K562 (cell line): ENCODE measurements at regions of chr10 and their contacts with region 1.

Region 1: DNA sequence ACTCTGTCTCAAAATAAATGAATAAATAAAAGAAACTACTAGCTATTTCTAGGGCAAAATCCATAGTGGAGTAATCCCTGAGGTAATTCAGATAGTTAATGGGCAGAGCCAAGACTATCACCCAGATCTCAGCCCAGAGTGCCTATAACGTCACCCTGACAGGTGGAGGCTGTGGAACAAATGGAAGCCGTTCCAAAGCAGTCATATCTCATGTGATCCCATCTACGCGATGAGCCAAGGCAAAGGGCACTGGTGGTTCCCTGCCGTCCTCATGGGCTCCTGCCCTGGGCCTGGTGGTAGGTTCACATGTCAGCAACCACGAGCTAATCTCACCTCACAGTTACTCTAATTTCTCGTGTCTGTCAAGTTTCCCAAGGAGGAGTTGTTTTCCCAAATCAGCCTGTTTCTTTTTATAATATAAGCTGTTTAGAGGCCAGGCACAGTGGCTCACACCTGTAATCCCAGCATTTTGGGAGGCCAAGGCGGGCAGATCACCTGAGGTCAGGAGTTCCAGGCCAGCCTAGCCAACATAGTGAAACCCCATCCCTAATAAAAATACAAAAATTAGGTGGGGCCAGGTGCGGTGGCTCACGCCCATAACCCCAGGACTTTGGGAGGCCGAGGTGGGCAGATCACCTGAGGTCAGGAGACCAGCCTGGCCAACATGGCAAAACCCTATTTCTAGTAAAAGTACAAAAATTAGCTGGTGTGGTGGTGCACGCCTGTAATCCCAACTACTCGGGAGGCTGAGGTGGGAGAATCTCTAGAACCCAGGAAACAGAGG is 22.5 kb upstream of the ASCC1 start:
- DNase-seq: no peak
- ATAC-seq: no peak
- H3K4me3 ChIP-seq: no peak overlapping the region
- H3K27ac ChIP-seq: no peak overlapping the region; the same call in 2 of the 3 replicates
- H3K4me1 ChIP-seq: peaks cover 0 to 4% of the 10 kb centered on the region in 2 experiments; a peak in 4 of 5 replicates
- H3K27me3 ChIP-seq: no peaks in the 10 kb centered on the region
- CTCF ChIP-seq: no peak
- EP300 ChIP-seq: no peak
- POLR2A ChIP-seq: no peak
- RAD21 ChIP-seq: no peak

Region 2: DNA sequence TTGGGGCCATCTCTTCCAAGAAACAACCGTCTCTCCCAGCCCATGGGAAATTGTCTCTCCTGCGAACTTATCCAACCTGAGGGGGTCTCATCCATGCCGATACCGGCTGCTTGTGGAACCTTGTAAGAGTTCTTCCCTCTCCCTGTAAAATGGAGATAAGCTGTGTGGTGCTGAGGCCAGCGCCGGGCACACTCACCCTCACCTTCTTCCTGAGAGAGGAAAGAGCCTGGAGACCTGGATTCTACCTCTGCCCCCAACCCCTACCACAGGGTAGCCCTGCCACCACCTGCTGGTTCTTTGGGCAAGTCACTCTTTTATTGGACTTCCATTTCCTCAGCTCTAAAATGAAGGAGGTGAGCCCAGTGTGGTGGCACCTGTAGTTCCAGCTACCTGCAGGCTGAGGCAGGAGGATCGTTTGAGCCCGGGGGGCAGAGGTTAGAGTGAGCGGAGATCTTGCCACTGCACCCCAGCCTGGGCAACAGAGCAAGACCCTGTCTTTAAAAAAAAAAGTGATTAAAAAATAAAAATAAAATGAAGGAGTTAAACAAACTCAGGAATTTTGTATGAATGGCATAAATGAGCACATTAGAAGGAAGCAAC is 349.1 kb before region 1 on chr10:
- CTCF ChIA-PET with region 1: no interaction called
- POLR2A ChIA-PET with region 1: no interaction called
- in situ Hi-C with region 1: no loop called
- intact Hi-C with region 1: no loop called
- DNase-seq: peak in 1 of 4 experiments; percentile 43
- ATAC-seq: peak; percentile 19
- H3K4me3 ChIP-seq: peak overlapping the region; percentile 47
- H3K27ac ChIP-seq: peak overlapping the region; percentile 76; the same call in 2 of the 3 replicates
- H3K4me1 ChIP-seq: peaks cover 26 to 41% of the 10 kb centered on the region in 2 experiments
- H3K27me3 ChIP-seq: no peaks in the 10 kb centered on the region
- CTCF ChIP-seq: peak in 2 of 3 experiments; percentile 2 to 34; a peak in 2 of 6 replicates
- EP300 ChIP-seq: no peak
- POLR2A ChIP-seq: no peak
- RAD21 ChIP-seq: peak in 1 of 2 experiments; percentile 40; a peak in 2 of 4 replicates

Region 3: GRCh38 chr10:71995887-71996575 is 242.6 kb before region 1 on chr10:
- CTCF ChIA-PET with region 1: no interaction called
- POLR2A ChIA-PET with region 1: no interaction called
- in situ Hi-C with region 1: no loop called
- intact Hi-C with region 1: no loop called
- DNase-seq: no peak
- ATAC-seq: no peak
- H3K4me3 ChIP-seq: no peak overlapping the region
- H3K27ac ChIP-seq: no peak overlapping the region
- H3K4me1 ChIP-seq: peaks cover 10 to 13% of the 10 kb centered on the region in 2 experiments; a peak in 3 of 5 replicates
- H3K27me3 ChIP-seq: peaks cover 20 to 40% of the 10 kb centered on the region in 2 experiments
- CTCF ChIP-seq: no peak
- EP300 ChIP-seq: no peak
- POLR2A ChIP-seq: no peak
- RAD21 ChIP-seq: no peak

Region 4: GRCh38 chr10:72248468-72249151 is 10.0 kb after region 1 on chr10:
- CTCF ChIA-PET with region 1: no interaction called
- POLR2A ChIA-PET with region 1: interaction called, 19 read pairs
- in situ Hi-C with region 1: no loop called
- intact Hi-C with region 1: no loop called
- DNase-seq: no peak
- ATAC-seq: peak; percentile 51
- H3K4me3 ChIP-seq: no peak overlapping the region
- H3K27ac ChIP-seq: no peak overlapping the region
- H3K4me1 ChIP-seq: peaks cover 34 to 50% of the 10 kb centered on the region in 2 experiments
- H3K27me3 ChIP-seq: no peaks in the 10 kb centered on the region
- CTCF ChIP-seq: no peak
- EP300 ChIP-seq: no peak
- POLR2A ChIP-seq: no peak
- RAD21 ChIP-seq: no peak

Region 5: GRCh38 chr10:72254813-72255568 is 16.4 kb after region 1 on chr10:
- CTCF ChIA-PET with region 1: no interaction called
- POLR2A ChIA-PET with region 1: interaction called, 15 read pairs
- in situ Hi-C with region 1: no loop called
- intact Hi-C with region 1: no loop called
- DNase-seq: peak; percentile 69 to 82 (median 77)
- ATAC-seq: peak; percentile 92
- H3K4me3 ChIP-seq: peak overlapping the region; percentile 15
- H3K27ac ChIP-seq: peak overlapping the region; percentile 64
- H3K4me1 ChIP-seq: peaks cover 25 to 46% of the 10 kb centered on the region in 2 experiments
- H3K27me3 ChIP-seq: no peaks in the 10 kb centered on the region
- CTCF ChIP-seq: peak in 2 of 3 experiments; percentile 26 to 52; a peak in 3 of 6 replicates
- EP300 ChIP-seq: peak; percentile 48; the same call in 1 of the 2 replicates
- POLR2A ChIP-seq: no peak
- RAD21 ChIP-seq: peak; percentile 48 to 67